AG04449 (cell line): ENCODE measurements at regions of chr11 and their contacts with region 1.

Region 1: GRCh38 chr11:128848815-128849455 is 18.2 kb downstream of the KCNJ1 start:
- DNase-seq: no peak
- H3K4me3 ChIP-seq: no peak overlapping the region
- CTCF ChIP-seq: peak; percentile 76

Region 2: GRCh38 chr11:128859563-128860441 is 10.9 kb after region 1 on chr11:
- CTCF ChIA-PET with region 1: interaction called, 47 read pairs
- POLR2A ChIA-PET with region 1: no interaction called
- DNase-seq: no peak
- H3K4me3 ChIP-seq: no peak overlapping the region
- CTCF ChIP-seq: peak; percentile 73